ENCODE measurements at regions of chr15 and their contacts with region 1.

Region 1: GRCh38 chr15:75367913-75368688 is at the start of gene MAN2C1:
- DNase-seq: peak; percentile 96
- H3K4me3 ChIP-seq: peak within 1 kb of the TSS; percentile 64 to 79 (median 76)
- H3K27ac ChIP-seq: peak within 1 kb of the TSS; percentile 83
- H3K4me1 ChIP-seq: peaks cover 42% of the 10 kb centered on the region
- H3K27me3 ChIP-seq: no peaks in the 10 kb centered on the region
- CTCF ChIP-seq: peak; percentile 70 to 85
- total RNA-seq, gene MAN2C1: 78.2 to 156 TPM

Region 2: GRCh38 chr15:75453703-75454470 is 85.8 kb after region 1 on chr15:
- CTCF ChIA-PET with region 1: interaction called, 11 read pairs
- dilution Hi-C with region 1: no loop called
- in situ Hi-C with region 1: no loop called
- intact Hi-C with region 1: loop called (anchors 1 kb)
- DNase-seq: peak; percentile 100
- H3K4me3 ChIP-seq: peak overlapping the region; percentile 80 to 96 (median 91)
- H3K27ac ChIP-seq: peak overlapping the region; percentile 87
- H3K4me1 ChIP-seq: peaks cover 31% of the 10 kb centered on the region
- H3K27me3 ChIP-seq: no peaks in the 10 kb centered on the region
- CTCF ChIP-seq: no peak

Region 3: DNA sequence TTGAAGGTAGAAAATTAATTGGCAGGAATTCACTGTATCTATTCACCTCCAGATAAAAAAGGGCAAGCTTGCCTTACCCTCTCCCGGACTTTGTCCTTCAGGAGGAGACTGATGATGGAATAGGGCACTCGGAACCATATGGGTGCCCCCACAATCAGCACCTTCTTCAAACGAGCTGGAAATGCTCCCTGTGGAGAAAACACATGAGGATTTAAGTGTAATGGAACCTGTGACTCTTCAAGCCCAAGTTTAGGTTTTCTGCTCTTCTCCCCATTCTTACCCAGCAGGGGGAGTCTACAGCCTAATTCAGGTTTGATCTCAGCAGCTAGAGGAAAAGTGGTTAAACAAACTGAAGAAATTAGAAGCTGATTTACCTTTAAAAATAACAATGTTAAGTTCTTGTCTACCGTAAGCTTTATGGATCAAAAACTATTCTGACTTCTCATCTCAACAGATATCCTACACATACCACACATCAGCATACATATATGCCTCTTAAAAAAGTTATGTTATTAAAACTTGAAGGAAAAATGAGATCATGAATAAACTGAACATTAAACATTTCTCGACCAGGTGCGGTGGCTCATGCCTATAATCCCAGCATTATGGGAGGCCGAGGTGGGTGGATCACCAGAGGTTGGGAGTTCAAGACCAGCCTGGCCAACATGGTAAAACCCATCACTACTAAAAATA is 140.9 kb after region 1 on chr15:
- CTCF ChIA-PET with region 1: no interaction called
- dilution Hi-C with region 1: no loop called
- in situ Hi-C with region 1: no loop called
- intact Hi-C with region 1: loop called (anchors 5 kb)
- DNase-seq: peak; percentile 13
- H3K4me3 ChIP-seq: no peak overlapping the region
- H3K27ac ChIP-seq: no peak overlapping the region
- H3K4me1 ChIP-seq: no peaks in the 10 kb centered on the region
- H3K27me3 ChIP-seq: no peaks in the 10 kb centered on the region
- CTCF ChIP-seq: peak; percentile 32 to 56

Region 4: DNA sequence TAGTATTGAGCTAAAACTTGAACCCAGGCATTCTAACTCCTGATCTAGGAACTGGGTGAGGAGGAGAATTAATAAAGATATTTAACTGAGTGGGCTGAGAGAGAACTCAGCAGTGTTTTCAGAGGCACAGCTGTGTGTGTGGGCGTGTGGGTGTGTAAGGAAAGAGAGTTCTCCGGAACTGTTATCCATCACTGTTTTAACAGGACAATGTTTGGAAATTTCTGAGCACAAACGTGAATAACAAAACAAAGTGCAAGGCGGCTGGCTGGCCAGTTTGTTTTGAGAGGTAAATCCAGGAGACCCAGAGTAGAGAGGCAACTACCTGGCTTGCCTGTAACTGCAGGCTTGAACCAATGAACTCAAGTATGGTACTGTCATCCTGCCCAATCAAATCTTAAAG is 216.0 kb after region 1 on chr15:
- CTCF ChIA-PET with region 1: no interaction called
- dilution Hi-C with region 1: no loop called
- in situ Hi-C with region 1: no loop called
- intact Hi-C with region 1: no loop called
- DNase-seq: no peak
- H3K4me3 ChIP-seq: no peak overlapping the region
- H3K27ac ChIP-seq: no peak overlapping the region
- H3K4me1 ChIP-seq: peaks cover 4% of the 10 kb centered on the region
- H3K27me3 ChIP-seq: no peaks in the 10 kb centered on the region
- CTCF ChIP-seq: no peak

Region 5: DNA sequence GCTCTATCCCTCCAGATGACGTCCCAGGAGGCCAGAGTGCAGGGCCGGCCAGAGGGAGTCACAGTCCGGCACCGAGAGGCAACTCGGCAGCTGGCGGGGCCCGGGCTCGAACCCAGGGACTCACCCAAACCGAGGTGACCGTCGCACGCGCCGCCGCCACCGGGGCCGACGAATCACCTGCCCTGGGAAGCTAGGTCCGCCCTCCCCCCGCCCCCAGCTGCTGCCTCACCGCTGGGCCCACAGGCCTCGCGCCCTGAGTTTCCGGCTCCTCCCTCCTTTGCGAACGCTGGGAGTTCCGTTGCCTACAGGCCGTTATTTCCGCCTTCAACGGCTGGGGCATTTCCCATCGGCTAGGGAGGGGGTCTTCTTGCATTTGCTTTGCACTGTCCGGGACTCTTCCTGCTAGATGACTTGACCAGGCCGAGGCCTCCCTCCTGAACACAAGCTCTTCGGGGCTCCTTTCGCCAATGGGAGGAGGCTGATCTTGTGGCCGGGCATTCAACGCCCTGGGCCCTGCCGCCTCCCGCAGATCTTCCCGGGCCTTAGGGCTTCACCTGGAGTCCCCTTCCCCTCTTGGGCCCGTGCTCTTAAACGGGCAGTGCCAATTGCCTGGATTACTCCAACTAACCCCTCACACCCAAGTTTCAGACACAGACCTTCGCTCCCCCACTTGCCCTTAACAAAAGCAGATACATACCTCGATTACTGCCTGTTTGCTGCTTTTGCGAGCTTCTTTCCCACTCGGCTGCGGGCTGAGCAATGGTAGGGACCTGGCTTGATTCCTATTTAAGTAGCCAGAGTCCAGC is 257.6 kb after region 1 on chr15 and contains the start of gene SNUPN:
- CTCF ChIA-PET with region 1: interaction called, 7 read pairs
- dilution Hi-C with region 1: no loop called
- in situ Hi-C with region 1: no loop called
- intact Hi-C with region 1: loop called (anchors 2 kb)
- DNase-seq: peak; percentile 87
- H3K4me3 ChIP-seq: peak within 1 kb of the TSS; percentile 65 to 100 (median 96)
- H3K27ac ChIP-seq: peak within 1 kb of the TSS; percentile 82
- H3K4me1 ChIP-seq: peaks cover 26% of the 10 kb centered on the region
- H3K27me3 ChIP-seq: no peaks in the 10 kb centered on the region
- CTCF ChIP-seq: no peak
- total RNA-seq, gene SNUPN: 16.5 to 21.5 TPM

Region 6: DNA sequence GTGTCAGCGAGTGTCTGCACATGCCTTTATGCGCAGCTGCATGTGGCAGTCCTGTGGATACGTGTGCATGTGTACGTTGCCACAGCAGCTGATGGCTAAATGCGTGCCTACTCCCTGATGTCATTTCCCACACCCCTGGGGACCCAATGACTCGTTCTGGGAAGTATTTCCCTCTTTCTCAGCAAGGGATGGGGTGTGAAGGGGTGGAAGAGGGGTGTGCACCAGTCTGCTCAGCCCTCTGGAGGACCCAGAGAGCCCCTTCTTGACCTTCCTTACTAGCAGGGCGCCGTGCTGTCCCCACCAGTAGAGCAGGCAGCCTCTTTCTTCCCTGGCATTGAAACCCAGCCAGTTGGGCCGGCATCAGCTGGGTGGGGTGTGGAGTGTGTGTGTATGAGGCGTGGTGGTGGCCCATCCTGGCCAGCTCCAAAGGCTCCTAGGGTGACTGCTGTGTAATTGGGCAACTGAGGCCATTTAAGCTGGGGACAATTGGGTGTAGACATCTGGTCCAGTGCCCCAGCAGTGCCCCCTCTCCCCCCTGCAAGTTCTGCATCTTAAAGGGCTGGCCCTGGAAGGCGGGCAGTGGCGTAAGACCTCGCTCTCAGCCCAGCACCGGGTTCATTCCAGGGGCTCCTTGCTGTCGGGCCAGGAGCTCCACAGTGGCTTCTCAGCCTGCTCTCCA is 298.9 kb after region 1 on chr15:
- CTCF ChIA-PET with region 1: no interaction called
- dilution Hi-C with region 1: no loop called
- in situ Hi-C with region 1: no loop called
- intact Hi-C with region 1: loop called (anchors 5 kb)
- DNase-seq: peak; percentile 99
- H3K4me3 ChIP-seq: no peak overlapping the region
- H3K27ac ChIP-seq: peak overlapping the region; percentile 98
- H3K4me1 ChIP-seq: peaks cover 61% of the 10 kb centered on the region
- H3K27me3 ChIP-seq: no peaks in the 10 kb centered on the region
- CTCF ChIP-seq: no peak

Region 7: DNA sequence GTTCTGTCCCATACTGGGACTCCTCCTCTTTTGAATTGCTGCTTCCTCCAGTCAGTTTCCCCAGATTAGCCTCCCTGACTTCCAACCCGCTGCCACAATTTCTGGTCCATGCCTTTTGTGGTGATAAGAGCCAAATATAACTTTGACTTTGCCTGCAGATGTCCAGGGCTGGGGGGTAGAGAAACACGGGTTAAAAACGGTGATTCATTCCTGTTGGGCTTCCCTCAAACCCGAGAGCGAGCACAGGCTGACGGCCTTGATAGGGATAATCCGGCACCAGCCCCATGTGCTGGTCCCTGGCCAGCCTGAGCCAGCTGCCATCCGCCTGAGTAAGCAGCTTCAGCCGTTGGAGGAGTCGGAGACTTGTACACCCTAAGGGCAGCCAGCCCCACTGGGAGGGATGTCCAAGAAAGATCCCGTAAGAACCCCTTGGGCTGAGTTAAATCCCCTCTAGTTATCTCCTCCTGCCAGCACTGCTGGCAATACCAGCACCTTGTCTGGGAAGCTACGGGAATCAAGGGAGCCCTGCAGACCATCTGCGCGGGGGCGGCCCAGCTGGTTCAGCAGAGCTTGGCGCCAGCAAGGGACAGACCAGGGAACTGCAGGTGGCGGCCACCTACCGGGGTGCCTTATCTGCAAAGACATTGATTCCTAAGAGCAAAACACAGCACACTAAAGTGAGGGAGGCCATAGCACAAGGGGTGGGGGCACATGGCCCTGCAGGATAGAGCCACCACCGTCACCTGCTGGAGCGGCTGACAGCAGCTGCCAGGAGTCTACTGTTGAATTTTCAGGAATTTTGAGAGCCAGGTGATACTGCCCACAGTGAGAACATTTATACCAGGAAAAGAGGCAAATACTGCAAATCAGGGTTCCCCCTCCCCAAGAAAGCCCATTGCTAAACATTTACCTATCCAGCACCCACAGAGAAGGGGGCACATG is 326.4 kb after region 1 on chr15:
- CTCF ChIA-PET with region 1: no interaction called
- dilution Hi-C with region 1: no loop called
- in situ Hi-C with region 1: no loop called
- intact Hi-C with region 1: no loop called
- DNase-seq: peak; percentile 96
- H3K4me3 ChIP-seq: no peak overlapping the region
- H3K27ac ChIP-seq: peak overlapping the region; percentile 80
- H3K4me1 ChIP-seq: peaks cover 60% of the 10 kb centered on the region
- H3K27me3 ChIP-seq: no peaks in the 10 kb centered on the region
- CTCF ChIP-seq: peak; percentile 20 to 63